Panc1 (cell line): ENCODE measurements at regions of chr17 and their contacts with region 1.

Region 1: DNA sequence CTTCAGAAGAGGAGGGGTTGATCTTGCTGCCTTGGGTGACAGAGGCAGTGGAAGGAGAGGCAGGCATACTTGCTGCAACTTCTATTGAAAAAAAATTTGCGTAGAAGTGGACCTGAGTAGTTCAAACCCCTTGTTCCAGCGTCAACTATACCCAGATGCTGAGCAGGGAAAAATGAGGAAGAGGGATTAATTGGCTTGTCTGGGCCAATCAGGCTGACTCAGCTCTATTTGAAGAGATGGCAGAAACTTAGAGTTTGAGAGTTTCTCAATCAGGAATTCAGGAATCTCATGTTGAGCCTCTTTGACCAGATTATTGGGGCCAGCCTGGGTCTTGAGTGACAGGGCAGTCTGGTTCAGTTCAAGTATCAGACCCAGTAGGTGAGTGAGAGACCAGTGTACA is 17.6 kb downstream of the CASC3 start:
- DNase-seq: no peak
- ATAC-seq: no peak
- H3K4me3 ChIP-seq: no peak overlapping the region
- H3K27ac ChIP-seq: no peak overlapping the region
- H3K4me1 ChIP-seq: no peaks in the 10 kb centered on the region
- H3K27me3 ChIP-seq: no peaks in the 10 kb centered on the region
- CTCF ChIP-seq: no peak

Region 2: DNA sequence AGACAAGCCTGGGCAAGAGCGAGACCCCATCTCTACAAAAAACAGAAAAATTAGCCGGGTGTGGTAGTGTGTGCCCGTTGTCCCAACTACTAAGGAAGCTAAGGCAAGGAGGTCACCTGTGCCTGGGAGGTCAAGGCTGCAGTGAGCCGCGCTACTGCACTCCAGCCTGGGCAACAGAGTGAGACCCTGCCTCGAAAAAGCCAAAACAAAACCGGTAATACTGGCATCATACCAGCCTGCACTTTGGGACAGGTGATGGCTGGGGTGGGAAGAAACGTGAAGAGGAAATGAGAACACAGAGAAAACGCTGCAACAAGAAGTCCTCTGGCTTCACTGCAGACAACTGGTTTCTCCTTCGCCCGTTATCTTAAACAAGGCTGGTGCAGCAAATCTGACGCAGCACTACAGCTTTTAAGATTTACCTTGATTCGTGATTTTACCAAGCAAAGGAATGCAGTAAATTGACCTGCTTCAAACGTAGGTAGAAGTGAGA is 18.4 kb before region 1 on chr17:
- CTCF ChIA-PET with region 1: no interaction called
- POLR2A ChIA-PET with region 1: interaction called, 12 read pairs
- in situ Hi-C with region 1: no loop called
- intact Hi-C with region 1: no loop called
- DNase-seq: no peak
- ATAC-seq: peak; percentile 3
- H3K4me3 ChIP-seq: peak overlapping the region; percentile 68 to 93
- H3K27ac ChIP-seq: peak overlapping the region; percentile 96
- H3K4me1 ChIP-seq: peaks cover 15% of the 10 kb centered on the region
- H3K27me3 ChIP-seq: no peaks in the 10 kb centered on the region
- CTCF ChIP-seq: no peak

Region 3: GRCh38 chr17:40317880-40318829 is 160.2 kb after region 1 on chr17:
- CTCF ChIA-PET with region 1: interaction called, 11 read pairs
- POLR2A ChIA-PET with region 1: no interaction called
- in situ Hi-C with region 1: no loop called
- intact Hi-C with region 1: no loop called
- DNase-seq: no peak
- ATAC-seq: peak; percentile 83
- H3K4me3 ChIP-seq: peak overlapping the region; percentile 72 to 87
- H3K27ac ChIP-seq: peak overlapping the region; percentile 91
- H3K4me1 ChIP-seq: peaks cover 77% of the 10 kb centered on the region
- H3K27me3 ChIP-seq: no peaks in the 10 kb centered on the region
- CTCF ChIP-seq: no peak

Region 4: GRCh38 chr17:40328386-40328766 is 170.4 kb after region 1 on chr17:
- CTCF ChIA-PET with region 1: no interaction called
- POLR2A ChIA-PET with region 1: no interaction called
- in situ Hi-C with region 1: no loop called
- intact Hi-C with region 1: no loop called
- DNase-seq: no peak
- ATAC-seq: no peak
- H3K4me3 ChIP-seq: no peak overlapping the region
- H3K27ac ChIP-seq: peak overlapping the region; percentile 12; the same call in 1 of the 2 replicates
- H3K4me1 ChIP-seq: peaks cover 83% of the 10 kb centered on the region
- H3K27me3 ChIP-seq: no peaks in the 10 kb centered on the region
- CTCF ChIP-seq: no peak